ENCODE measurements at regions of chr7 and their contacts with region 1.

Region 1: GRCh38 chr7:36152756-36153570 is at the start of gene EEPD1:
- DNase-seq: peak; percentile 99
- H3K4me3 Mint-ChIP-seq: peak within 1 kb of the TSS; percentile 78
- H3K27ac Mint-ChIP-seq: no peak within 1 kb of the TSS
- H3K4me1 Mint-ChIP-seq: peaks cover 13% of the 10 kb centered on the region
- H3K27me3 Mint-ChIP-seq: peaks cover 12% of the 10 kb centered on the region
- total RNA-seq, gene EEPD1: 0.91 and 1.5 TPM in 2 replicates

Region 2: GRCh38 chr7:35037526-35038339 is 1115.2 kb before region 1 on chr7:
- intact Hi-C with region 1: loop called (anchors 2 kb)
- DNase-seq: peak; percentile 85
- H3K4me3 Mint-ChIP-seq: peak overlapping the region; percentile 81
- H3K27ac Mint-ChIP-seq: peak overlapping the region; percentile 37
- H3K4me1 Mint-ChIP-seq: peaks cover 30% of the 10 kb centered on the region
- H3K27me3 Mint-ChIP-seq: peaks cover 13% of the 10 kb centered on the region

Region 3: GRCh38 chr7:35993676-35994606 is 159.0 kb before region 1 on chr7:
- intact Hi-C with region 1: loop called (anchors 5 kb)
- DNase-seq: no peak
- H3K4me3 Mint-ChIP-seq: no peak overlapping the region
- H3K27ac Mint-ChIP-seq: no peak overlapping the region
- H3K4me1 Mint-ChIP-seq: peaks cover 11% of the 10 kb centered on the region
- H3K27me3 Mint-ChIP-seq: peaks cover 3% of the 10 kb centered on the region

Region 4: GRCh38 chr7:36115448-36116321 is 37.3 kb before region 1 on chr7:
- intact Hi-C with region 1: loop called (anchors 1 kb)
- DNase-seq: peak; percentile 60
- H3K4me3 Mint-ChIP-seq: peak overlapping the region; percentile 32
- H3K27ac Mint-ChIP-seq: peak overlapping the region; percentile 61
- H3K4me1 Mint-ChIP-seq: peaks cover 33% of the 10 kb centered on the region
- H3K27me3 Mint-ChIP-seq: peaks cover 26% of the 10 kb centered on the region

Region 5: GRCh38 chr7:36286226-36286625 is 133.3 kb after region 1 on chr7:
- intact Hi-C with region 1: loop called (anchors 1 kb)
- DNase-seq: peak; percentile 55
- H3K4me3 Mint-ChIP-seq: peak overlapping the region; percentile 74
- H3K27ac Mint-ChIP-seq: peak overlapping the region; percentile 91
- H3K4me1 Mint-ChIP-seq: peaks cover 54% of the 10 kb centered on the region
- H3K27me3 Mint-ChIP-seq: no peaks in the 10 kb centered on the region

Region 6: DNA sequence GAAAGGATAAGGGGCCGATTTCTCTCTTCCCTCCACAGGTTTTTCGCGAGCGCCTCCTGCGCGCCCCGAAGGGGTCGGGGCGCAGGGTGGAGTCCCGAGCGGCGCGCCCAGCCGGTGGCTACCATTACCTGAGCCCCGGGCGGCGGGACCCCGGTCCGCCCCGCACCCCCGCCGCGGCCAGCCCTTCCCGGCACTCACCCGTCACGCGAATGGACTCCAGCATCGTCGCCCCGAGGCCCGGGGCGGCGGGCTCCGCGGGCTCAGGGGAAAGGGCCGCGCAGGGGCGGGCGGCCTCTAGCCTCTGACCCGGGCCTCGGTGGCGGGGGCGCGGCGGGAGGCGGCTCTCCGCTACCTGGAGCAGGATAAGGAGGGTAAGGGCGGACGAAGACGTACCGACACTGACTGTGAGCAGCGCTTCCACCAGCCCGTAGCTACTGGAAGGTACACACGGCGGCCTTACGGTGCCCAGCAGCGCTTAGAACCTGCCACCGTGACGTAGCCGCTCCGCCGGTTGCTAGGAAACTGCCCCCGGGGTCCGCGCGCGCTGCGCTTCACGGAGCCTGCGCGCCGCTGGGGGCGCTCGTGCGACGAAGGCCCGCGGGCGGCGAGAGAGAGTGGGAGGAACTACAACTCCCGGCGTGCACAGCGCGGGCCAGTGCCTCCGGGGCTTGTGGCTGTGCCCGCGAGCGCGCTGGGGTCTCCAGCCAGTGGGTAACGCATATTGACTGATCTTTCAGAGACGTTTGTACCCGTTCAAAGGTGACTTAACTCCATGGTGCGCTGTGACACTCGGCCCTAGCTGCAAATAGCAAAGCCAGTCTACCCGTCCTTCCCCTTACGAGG is 214.0 kb after region 1 on chr7:
- intact Hi-C with region 1: loop called (anchors 1 kb)
- DNase-seq: peak; percentile 91
- H3K4me3 Mint-ChIP-seq: peak overlapping the region; percentile 91
- H3K27ac Mint-ChIP-seq: peak overlapping the region; percentile 67
- H3K4me1 Mint-ChIP-seq: no peaks in the 10 kb centered on the region
- H3K27me3 Mint-ChIP-seq: peaks cover 31% of the 10 kb centered on the region

Measured in activated T-helper 1 cell treated with anti-CD3 and anti-CD28 coated beads, Interleukin-12 subunit alpha, Interleukin-12 subunit beta, Interleukin-2, Interleukin-4 antibody, amounts not matched to agents 30 ng/mL and 10 ng/mL and 1 ng/mL, durations not matched to agents 14 hours and 24 hours and 36 hours (primary cell).